Activated T-helper 1 cell treated with anti-CD3 and anti-CD28 coated beads, Interleukin-12 subunit alpha, Interleukin-12 subunit beta, Interleukin-2, Interleukin-4 antibody, amounts not matched to agents 30 ng/mL and 10 ng/mL and 1 ng/mL, durations not matched to agents 14 hours and 24 hours and 36 hours (primary cell): ENCODE measurements at regions of chr12 and their contacts with region 1.

Region 1: DNA sequence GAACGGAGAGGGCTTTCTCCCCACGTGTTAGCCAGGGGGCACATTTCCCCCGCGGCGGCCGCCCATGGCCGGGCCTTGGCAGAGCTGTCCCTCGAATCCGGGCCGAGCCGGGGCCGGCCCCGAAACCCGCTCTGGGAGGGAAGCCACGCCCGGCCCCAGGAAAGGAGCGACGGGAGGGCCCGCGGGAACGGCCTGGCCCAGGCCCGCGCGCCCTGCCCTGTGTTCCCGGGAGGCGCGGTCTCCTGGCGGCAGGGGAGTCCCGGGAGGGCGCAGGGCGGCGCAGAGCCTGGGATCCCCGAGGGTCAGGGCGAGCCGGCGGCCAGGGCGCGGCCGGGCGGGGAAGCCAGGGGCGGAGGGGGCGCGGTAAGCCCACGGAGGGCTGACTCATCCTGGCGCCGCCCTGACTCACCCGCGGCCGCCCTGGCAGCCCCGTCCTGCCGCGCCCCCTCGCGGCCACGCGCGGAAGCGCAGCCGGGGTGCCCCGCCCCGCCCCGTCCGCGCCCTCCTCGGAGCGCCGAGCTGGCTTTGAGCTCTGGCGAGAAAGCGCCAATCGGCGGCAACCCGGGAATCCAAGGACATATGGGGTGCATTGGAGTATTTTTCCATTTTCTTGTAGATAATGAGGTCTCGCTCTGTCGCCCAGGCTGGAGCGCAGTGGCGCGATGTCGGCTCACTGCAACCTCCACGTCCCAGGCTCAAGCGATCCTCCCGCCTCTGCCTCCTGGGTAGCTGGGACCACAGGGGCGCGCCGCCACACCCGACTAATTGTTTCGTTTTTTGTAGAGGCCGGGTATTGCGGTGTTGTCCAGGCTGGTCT is 31.8 kb upstream of the PLEKHG6 start:
- DNase-seq: peak; percentile 85
- H3K4me3 Mint-ChIP-seq: peak overlapping the region; percentile 83
- H3K27ac Mint-ChIP-seq: peak overlapping the region; percentile 88
- H3K4me1 Mint-ChIP-seq: peaks cover 8% of the 10 kb centered on the region
- H3K27me3 Mint-ChIP-seq: peaks cover 13% of the 10 kb centered on the region

Region 2: GRCh38 chr12:6062757-6063735 is 215.6 kb before region 1 on chr12:
- intact Hi-C with region 1: loop called (anchors 1 kb)
- DNase-seq: peak; percentile 17
- H3K4me3 Mint-ChIP-seq: no peak overlapping the region
- H3K27ac Mint-ChIP-seq: no peak overlapping the region
- H3K4me1 Mint-ChIP-seq: peaks cover 4% of the 10 kb centered on the region
- H3K27me3 Mint-ChIP-seq: peaks cover 2% of the 10 kb centered on the region